ENCODE measurements at regions of chr2 and their contacts with region 1.

Region 1: DNA sequence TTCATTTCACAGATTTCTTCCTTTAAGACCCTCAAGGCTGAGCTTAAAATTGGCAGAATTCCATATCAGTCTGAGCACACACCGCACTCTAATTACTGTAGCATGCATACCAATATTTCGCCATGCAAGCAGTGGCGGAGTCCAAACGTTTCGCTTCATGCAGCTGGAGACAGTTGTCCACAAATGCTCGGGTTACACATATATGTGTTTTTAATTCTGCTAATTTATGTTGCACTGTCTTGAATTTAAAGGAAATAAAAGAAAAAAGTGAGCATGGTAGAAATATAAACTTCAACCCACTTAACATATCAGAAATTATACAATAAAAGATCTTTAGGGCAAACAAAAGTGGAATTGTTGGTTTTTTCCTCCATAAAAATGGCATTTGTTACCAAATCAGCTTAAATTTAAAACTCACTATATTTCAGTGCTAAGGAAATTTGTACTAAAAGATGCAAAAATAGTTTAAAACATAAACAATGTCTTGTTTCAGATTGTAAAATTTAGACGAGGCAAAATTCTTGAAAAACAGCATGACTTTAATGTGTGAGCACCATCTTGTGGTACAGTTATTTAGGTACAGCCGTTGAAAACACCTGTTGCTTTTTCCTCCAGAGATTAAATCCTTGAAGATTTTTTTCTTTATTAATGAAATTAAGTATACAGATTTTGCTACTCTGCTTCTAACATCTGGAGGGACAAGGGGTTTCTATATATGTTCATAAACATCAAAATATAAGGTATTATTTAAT is 24.1 kb upstream of the KANSL1L start:
- DNase-seq: no peak
- H3K4me3 Mint-ChIP-seq: no peak overlapping the region
- H3K27ac Mint-ChIP-seq: no peak overlapping the region
- H3K4me1 Mint-ChIP-seq: peaks cover 2% of the 10 kb centered on the region
- H3K27me3 Mint-ChIP-seq: no peaks in the 10 kb centered on the region

Region 2: DNA sequence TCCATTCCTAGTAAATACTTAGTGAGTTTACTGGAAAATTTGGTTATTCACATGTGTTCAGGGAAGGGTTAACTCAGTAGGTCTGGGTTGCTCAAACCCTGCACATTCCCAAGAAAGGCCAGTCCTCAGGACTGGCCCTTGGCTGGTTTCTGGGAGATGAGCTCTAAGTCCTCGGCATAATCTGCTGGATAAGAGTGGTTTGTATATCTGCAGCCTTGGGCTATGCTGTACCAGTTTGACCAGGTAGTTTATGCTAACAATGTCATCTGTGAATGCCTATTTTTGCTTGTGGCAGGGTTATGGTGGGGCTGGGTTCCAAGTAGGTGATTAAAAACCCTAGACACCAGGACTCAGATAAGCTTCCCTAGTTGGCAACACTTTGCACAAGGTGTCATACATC is 1796.1 kb before region 1 on chr2:
- CTCF ChIA-PET with region 1: no interaction called
- intact Hi-C with region 1: loop called (anchors 5 kb)
- DNase-seq: no peak
- H3K4me3 Mint-ChIP-seq: no peak overlapping the region
- H3K27ac Mint-ChIP-seq: no peak overlapping the region
- H3K4me1 Mint-ChIP-seq: no peaks in the 10 kb centered on the region
- H3K27me3 Mint-ChIP-seq: peaks cover 17% of the 10 kb centered on the region

Region 3: DNA sequence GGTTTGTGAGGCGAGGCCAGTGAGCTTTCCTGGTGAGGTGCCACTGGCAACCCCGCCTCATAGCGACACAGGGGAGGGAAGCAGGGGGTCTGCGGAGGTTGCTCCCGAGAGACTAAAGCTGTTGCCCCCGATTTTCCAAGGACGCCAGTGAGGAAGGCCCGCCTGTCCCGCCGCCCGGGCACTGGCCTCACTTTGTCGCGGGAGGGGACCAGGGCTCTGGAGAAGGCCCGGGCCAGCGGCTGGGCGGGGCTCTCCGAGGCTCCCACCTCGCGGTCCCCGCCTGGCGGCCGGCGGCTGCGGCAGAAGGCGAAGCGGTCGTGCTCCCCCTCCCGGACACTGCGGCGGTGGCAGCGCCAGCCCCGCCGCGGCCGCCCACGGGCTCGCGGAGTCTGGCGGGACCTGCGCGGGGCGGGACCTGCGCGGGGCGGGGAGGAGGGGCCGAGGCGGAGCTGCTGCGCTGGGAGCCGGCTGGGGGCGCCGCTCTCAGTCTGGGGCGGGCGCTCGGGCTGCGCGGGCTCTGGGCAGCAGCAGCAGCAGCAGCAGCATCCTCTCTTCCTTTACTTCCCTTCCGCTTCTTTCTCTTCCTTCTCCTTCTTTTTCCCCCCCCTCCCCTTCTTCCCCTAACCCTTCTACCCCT is 771.6 kb before region 1 on chr2 and contains the start of gene MAP2:
- CTCF ChIA-PET with region 1: no interaction called
- intact Hi-C with region 1: loop called (anchors 1 kb)
- DNase-seq: peak; percentile 74
- H3K4me3 Mint-ChIP-seq: peak within 1 kb of the TSS; percentile 73
- H3K27ac Mint-ChIP-seq: no peak within 1 kb of the TSS
- H3K4me1 Mint-ChIP-seq: peaks cover 12% of the 10 kb centered on the region
- H3K27me3 Mint-ChIP-seq: peaks cover 42% of the 10 kb centered on the region
- total RNA-seq, gene MAP2: 0.20 to 0.67 TPM

Region 4: DNA sequence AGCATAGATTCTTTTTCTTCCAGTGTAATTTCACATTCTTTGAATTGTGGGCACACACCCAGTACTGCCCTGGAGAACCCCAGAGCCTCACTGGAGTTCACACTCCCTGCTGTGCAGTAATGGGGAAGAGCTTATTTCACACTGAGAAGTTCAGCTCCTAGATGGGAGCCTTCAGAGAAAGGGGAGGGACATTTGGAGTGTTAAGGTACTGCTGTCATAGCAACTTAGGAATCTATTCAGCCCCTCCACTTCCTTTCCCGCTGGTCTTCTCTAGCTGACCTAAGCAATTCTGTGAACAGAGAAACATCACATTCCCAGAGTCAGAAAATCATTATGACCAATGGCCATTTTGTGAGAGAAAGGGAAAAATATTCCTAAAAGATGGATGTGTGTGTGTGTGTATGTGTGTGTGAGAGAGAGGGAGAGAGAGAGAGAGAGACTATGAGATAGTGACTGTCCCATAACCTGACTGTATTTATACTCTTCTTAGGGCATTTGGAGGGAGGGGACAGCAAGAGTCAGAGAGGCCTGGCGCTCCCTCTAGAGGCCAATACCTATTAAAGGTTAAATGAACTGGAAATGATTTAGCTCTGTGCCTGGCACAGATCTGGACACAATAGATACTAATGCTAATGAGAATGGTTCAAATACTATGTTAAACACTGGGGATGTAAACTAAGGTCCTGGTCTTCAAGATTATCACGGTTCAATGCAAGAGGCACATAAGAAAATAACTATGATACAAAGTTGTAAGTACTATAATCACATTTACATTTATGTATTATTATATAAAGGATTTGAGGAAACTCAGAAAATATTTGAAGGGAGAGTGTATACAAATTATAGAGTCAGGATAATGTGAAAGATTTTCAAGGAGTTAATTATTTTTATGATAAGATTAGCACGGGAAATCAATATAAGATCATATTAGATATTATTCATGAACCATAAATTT is 234.3 kb before region 1 on chr2:
- CTCF ChIA-PET with region 1: interaction called, 4 read pairs
- intact Hi-C with region 1: loop called (anchors 5 kb)
- DNase-seq: peak; percentile 63
- H3K4me3 Mint-ChIP-seq: no peak overlapping the region
- H3K27ac Mint-ChIP-seq: no peak overlapping the region
- H3K4me1 Mint-ChIP-seq: no peaks in the 10 kb centered on the region
- H3K27me3 Mint-ChIP-seq: no peaks in the 10 kb centered on the region

Region 5: DNA sequence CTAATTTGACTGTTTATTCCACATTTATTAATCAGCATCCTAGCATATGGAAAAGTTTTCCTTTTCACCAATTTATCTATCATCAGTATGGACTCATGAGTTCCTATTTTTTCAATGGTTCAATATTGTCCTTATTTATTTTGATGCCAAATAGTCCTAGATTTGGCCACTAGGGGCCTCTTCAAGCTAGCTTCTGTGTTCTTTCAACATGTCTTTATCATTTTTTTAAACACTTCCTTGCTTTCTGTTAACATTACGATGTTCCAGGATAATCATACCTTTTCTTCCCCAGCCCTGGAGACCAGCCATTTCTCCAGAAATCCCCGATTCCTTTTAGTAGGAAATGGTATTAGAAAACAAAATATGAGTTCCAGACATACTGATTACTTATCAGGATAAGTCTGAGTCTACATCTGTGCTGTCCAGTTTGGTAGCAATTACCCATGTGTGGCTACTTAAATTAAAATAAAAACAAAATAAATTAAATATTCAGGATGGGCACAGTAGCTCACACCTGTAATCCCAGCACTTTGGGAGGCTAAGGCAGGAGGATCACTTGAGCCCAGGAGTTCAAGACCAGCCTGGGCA is 122.3 kb before region 1 on chr2:
- CTCF ChIA-PET with region 1: interaction called, 6 read pairs
- intact Hi-C with region 1: loop called (anchors 1 kb)
- DNase-seq: no peak
- H3K4me3 Mint-ChIP-seq: no peak overlapping the region
- H3K27ac Mint-ChIP-seq: no peak overlapping the region
- H3K4me1 Mint-ChIP-seq: no peaks in the 10 kb centered on the region
- H3K27me3 Mint-ChIP-seq: no peaks in the 10 kb centered on the region

Region 6: GRCh38 chr2:210171309-210172203 is 23.7 kb before region 1 on chr2 and contains the start of gene KANSL1L:
- CTCF ChIA-PET with region 1: interaction called, 3 read pairs
- intact Hi-C with region 1: loop called (anchors 1 kb)
- DNase-seq: peak; percentile 95
- H3K4me3 Mint-ChIP-seq: peak within 1 kb of the TSS; percentile 98
- H3K27ac Mint-ChIP-seq: peak within 1 kb of the TSS; percentile 96
- H3K4me1 Mint-ChIP-seq: peaks cover 20% of the 10 kb centered on the region
- H3K27me3 Mint-ChIP-seq: peaks cover 3% of the 10 kb centered on the region
- total RNA-seq, gene KANSL1L: 4.4 to 4.8 TPM

Measured in activated naive CD4-positive, alpha-beta T cell treated with anti-CD3 and anti-CD28 coated beads for 36 hours (primary cell).